Astrocyte of the cerebellum (primary cell): ENCODE measurements at regions of chr11 and their contacts with region 1.

Region 1: GRCh38 chr11:124739479-124740276 is at the start of gene NRGN:
- DNase-seq: peak; percentile 60
- H3K4me3 ChIP-seq: peak within 1 kb of the TSS; percentile 49
- CTCF ChIP-seq: no peak

Region 2: DNA sequence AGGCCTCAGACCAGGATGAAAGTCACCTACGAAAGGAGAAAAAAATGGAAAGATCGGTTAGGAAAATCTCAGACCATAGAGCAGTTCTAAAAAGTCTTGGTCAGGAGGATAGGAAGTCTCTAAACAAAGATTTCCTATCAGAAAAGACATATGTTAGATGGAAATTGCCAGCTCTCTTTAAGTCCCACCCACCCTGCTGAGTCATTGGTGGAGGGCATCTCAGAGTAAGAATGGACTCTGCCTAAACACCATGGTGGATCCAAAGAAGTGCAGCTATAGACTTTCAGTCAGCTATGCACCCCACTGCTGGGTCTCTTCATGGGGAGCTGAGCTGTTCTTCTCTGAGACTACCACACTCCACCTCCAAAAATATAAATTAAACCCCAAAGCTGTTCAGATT is 359.1 kb before region 1 on chr11:
- in situ Hi-C with region 1: no loop called
- DNase-seq: no peak
- H3K4me3 ChIP-seq: no peak overlapping the region
- CTCF ChIP-seq: no peak

Region 3: DNA sequence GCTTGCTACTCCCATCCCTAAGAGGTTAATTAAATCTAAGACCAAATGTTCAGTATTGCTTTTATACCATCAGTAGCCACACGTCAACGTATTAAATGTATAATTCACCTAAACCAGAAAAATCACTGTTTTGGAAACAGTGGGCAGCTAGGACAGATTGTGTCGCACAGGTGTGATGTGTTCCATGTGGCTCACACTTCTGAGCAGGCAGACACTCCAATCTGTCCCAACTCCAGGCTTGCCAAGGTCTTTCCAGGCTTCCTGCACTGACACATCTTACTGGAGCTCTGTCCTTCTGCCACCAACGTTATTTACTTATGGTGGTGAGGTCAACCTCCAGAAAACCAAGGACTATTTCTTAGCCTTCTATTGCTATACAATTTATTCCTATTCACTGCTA is 77.6 kb before region 1 on chr11:
- in situ Hi-C with region 1: loop called (anchors 5 kb)
- DNase-seq: no peak
- H3K4me3 ChIP-seq: no peak overlapping the region
- CTCF ChIP-seq: no peak

Region 4: GRCh38 chr11:124699547-124699946 is 40.1 kb before region 1 on chr11:
- in situ Hi-C with region 1: loop called (anchors 5 kb)
- DNase-seq: no peak
- H3K4me3 ChIP-seq: no peak overlapping the region
- CTCF ChIP-seq: no peak

Region 5: DNA sequence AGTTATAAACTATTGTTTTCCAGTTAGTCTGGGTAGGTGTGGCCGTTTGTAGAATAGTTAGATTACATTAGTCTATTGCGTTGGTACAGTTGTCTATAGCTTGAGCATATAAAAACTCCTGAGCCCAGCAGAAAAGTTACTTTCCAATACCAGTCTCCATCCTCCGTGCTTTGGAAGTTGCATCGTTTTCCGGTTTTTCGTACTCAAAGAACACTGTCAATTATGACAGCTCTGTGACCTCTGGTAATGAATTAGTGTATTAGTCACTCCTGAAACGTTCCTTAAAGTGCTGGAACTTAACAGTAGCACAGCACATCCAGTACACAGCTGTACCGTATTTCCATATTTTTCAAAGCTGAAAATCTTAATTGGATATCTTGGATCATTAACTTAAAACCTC is 61.3 kb after region 1 on chr11:
- in situ Hi-C with region 1: no loop called
- DNase-seq: peak; percentile 6
- H3K4me3 ChIP-seq: peak overlapping the region; percentile 72
- CTCF ChIP-seq: no peak